GM10248 (cell line): ENCODE measurements at regions of chr14 and their contacts with region 1.

Region 1: GRCh38 chr14:65164068-65164824 is 61.9 kb upstream of the MAX start:
- DNase-seq: peak; percentile 56
- CTCF ChIP-seq: peak; percentile 65

Region 2: DNA sequence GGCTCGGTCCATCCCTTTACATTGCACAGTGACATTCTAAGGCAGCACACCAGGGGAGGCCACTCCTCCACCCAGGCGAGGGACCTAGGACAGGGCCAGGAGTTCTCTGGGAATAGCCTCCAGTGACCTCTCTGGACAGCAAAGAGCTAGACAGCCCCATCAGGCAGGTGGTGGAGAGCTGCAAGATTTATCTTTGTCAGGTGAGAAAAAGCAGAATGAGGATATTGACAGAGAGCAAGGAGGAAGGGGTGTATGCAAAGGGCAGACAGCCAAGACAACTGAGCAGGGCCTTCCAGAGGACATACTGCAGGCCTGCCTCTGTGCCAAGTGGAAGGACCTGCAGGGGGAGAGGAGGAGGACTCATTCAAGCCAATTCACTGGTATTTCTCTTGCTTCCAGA is 50.5 kb after region 1 on chr14:
- CTCF ChIA-PET with region 1: interaction called, 11 read pairs
- POLR2A ChIA-PET with region 1: no interaction called
- DNase-seq: no peak
- CTCF ChIP-seq: no peak

Region 3: DNA sequence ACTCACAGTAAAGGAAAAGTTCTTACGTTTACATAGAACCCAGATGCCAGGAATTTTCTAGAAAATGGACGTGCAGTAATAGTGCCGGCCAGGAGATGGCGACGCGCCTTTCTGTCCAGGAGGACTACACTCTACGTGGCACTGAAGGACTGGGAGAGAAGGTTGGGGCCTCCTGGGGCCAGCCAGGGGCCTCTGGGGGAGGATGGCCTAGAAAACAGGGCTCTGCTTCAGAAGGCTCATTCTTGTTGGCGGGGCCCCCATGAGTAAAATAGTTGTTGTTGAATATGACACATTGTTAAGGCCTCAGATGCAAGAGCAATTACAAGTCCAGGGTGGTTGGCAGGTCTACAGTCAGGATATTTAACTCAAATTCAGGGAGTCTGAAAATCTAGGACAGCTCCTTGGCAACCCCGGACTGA is 58.2 kb after region 1 on chr14:
- CTCF ChIA-PET with region 1: interaction called, 11 read pairs
- POLR2A ChIA-PET with region 1: no interaction called
- DNase-seq: peak; percentile 68
- CTCF ChIP-seq: peak; percentile 87

Region 4: DNA sequence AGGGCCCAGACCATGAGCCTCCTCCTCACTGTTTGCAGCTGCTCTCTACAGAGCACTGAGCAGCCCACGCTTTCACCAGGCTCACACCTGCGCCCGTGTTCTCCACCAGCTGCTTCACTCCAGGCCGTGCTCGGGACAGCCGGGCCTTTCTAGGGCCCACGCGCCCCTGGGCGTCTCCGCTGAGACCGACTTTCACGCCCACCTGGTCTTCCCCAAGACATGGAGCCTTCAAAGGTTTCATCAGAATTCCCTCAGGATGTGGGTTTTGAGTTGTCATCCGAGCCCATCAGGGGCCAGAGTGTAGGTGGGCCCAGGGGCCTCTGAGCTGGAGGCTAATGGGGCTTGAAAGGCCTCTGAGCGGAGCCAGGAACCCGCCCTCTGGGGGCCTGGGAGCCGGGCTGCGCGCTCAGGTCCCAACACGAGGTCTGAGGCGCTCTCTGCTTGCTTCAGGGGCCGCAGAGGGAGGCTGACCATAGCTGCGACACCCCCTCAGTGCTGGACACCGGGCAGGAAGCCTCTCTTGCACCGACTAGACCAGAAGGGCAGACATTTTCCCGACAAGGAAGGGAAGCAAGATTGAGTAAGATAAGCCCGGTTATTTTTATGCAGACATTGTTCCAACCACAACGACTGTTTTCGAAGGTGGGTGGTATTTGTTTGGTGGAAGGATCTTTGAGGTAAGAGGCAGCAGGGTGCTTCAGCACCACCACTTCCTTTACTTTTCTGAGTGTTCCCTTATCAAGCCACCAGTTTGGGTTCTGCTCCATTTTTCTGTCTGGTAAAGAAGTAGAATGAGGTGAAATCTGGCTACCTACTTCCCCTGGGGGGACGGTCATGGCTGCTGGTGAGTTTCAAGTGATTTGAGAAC is 123.3 kb after region 1 on chr14:
- CTCF ChIA-PET with region 1: interaction called, 11 read pairs
- POLR2A ChIA-PET with region 1: interaction called, 5 read pairs
- DNase-seq: peak; percentile 81
- CTCF ChIP-seq: no peak

Region 5: GRCh38 chr14:65412032-65412846 is 248.0 kb after region 1 on chr14 and contains the start of gene FUT8:
- CTCF ChIA-PET with region 1: interaction called, 25 read pairs
- POLR2A ChIA-PET with region 1: no interaction called
- DNase-seq: peak; percentile 85
- CTCF ChIP-seq: peak; percentile 55

Region 6: DNA sequence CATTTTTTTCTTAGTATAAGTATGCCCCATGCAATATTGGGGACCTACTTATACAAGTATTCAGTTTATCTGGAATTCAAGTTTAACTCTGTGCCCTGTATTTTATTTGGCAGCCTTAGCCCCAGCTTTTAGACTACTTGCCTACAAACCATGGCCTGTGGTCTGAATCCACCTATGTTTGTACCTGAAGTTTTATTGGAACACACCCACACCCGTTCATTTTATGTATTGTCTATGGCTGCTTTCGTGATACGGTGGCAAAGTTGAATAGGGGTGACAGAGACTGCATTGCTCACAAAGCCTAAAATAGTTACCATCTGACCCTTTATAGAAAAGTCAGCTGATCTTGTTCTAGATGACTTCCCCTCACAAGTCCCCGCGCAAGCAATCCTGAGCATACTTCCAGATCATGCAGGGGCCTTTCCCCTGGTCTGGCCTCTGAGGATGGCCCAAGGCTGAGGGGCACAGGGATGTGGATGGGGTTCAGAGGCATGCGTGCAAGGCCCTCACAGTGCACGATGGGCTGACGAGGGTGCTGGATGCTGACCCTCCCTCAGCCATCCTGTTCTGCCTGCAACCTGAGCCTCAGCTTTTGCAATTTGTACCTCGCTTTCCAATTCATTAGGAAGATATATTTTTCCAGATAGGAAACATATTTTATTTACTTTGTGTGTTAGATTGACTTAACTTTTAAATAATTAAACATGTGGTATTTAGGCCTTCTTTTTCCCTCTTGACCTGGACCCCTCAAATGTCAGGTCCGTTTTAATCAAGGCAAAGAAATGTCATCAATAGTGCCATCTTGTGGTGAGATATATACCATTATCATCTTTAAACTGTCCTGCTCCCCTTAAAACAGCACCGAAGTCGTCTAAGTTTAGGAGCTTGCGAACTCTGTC is 794.7 kb after region 1 on chr14:
- CTCF ChIA-PET with region 1: interaction called, 68 read pairs
- POLR2A ChIA-PET with region 1: no interaction called
- DNase-seq: peak; percentile 48
- CTCF ChIP-seq: peak; percentile 55

Region 7: GRCh38 chr14:66070509-66071319 is 906.5 kb after region 1 on chr14:
- CTCF ChIA-PET with region 1: interaction called, 19 read pairs
- POLR2A ChIA-PET with region 1: no interaction called
- DNase-seq: peak; percentile 64
- CTCF ChIP-seq: peak; percentile 81